ENCODE measurements at regions of chr5 and their contacts with region 1.

Region 1: GRCh38 chr5:32426440-32427151 is 17.9 kb downstream of the ZFR start:
- DNase-seq: no peak
- H3K4me3 ChIP-seq: no peak overlapping the region
- H3K27ac ChIP-seq: no peak overlapping the region
- H3K4me1 ChIP-seq: no peaks in the 10 kb centered on the region
- CTCF ChIP-seq: no peak

Region 2: DNA sequence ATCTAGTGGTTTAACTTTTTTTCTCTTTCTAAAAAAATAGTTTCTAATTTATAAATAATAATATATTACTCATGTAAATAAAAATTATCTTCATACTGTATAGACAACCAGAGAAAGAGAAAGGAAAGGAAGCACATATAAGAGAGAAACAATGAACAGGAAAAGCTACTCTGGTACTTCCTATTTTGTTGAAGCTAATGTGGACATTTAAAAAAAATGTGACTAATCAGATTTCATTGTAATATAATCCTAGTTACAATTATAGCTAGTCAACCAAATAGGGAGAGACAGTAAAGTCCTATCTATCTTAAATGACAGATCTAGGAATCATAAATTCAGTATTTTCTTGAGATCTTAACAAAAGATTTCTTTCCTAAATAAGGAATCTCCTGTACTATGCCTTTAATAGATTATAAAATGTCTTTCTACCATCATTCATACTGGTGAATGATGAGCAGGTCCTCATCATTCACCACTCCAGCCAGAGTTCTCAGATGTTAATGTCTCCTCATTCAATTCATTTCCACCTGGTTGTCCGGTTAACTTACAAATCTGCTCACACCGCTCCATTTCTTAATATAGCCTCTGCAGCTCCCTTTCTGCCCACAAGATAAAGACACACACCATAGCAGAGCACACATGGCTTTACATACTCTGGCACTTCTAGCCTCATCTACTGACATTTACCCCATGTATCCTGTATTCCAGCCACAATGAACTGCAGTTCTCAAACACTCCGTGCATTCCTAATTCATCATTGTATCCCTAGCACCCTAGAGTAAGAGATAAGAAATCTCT is 12.9 kb before region 1 on chr5:
- CTCF ChIA-PET with region 1: no interaction called
- POLR2A ChIA-PET with region 1: interaction called, 3 read pairs
- intact Hi-C with region 1: loop called (anchors 1 kb)
- DNase-seq: no peak
- H3K4me3 ChIP-seq: no peak overlapping the region
- H3K27ac ChIP-seq: no peak overlapping the region
- H3K4me1 ChIP-seq: peaks cover 7% of the 10 kb centered on the region
- CTCF ChIP-seq: no peak

Measured in OCI-LY7 (cell line).